ENCODE measurements at regions of chr12 and their contacts with region 1.

Region 1: DNA sequence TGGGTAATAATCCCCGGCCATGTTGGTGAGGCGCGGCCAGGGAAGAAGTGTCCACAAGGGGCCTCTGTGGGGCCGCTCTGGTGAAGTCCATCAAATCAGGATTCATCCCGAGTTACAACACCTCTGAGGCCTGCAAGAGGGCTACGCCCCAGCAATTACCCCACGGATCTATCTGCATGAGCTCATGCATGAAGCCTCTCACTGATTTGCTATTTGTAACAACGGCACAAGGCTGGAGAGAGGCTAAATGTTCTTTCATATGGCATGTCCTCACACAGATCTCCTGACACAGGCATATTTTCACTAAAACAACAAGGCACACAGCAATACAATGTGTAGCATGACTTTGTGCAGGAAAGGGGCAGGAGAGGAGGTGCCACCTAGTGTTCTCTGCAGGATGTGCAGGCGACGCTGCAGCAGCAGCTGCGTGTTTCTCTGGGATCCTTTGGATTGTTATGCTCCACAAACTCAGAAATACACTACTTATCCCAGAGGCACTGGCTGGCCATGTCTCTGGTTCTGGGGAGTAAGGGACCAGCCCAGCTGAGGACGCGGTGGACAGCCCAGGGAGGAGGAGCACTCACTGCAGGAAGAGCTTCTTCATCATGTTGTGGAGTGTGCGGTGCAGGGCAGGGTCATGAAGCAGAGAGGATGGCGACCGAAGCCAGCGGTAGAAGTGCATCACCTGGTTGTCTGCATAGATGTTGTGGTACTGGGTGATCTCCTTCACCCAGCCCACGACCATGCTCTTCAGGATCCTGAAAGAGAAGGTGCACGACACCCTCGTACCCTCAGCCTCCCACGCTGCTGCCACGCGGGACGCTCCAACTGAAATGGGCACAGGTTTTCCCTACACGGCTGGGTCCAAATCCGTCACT is 20.2 kb downstream of the P2RX2 start:
- DNase-seq: peak; percentile 30
- H3K4me3 ChIP-seq: no peak overlapping the region
- H3K27ac ChIP-seq: no peak overlapping the region
- H3K27me3 ChIP-seq: no peaks in the 10 kb centered on the region
- CTCF ChIP-seq: peak; percentile 91

Region 2: GRCh38 chr12:132397152-132397933 is 241.4 kb before region 1 on chr12:
- CTCF ChIA-PET with region 1: interaction called, 11 read pairs
- POLR2A ChIA-PET with region 1: no interaction called
- DNase-seq: no peak
- H3K4me3 ChIP-seq: no peak overlapping the region
- H3K27ac ChIP-seq: no peak overlapping the region
- H3K27me3 ChIP-seq: peaks cover 19% of the 10 kb centered on the region
- CTCF ChIP-seq: no peak

Region 3: GRCh38 chr12:132414634-132415326 is 224.0 kb before region 1 on chr12:
- CTCF ChIA-PET with region 1: interaction called, 14 read pairs
- POLR2A ChIA-PET with region 1: no interaction called
- DNase-seq: peak; percentile 34
- H3K4me3 ChIP-seq: no peak overlapping the region
- H3K27ac ChIP-seq: no peak overlapping the region
- H3K27me3 ChIP-seq: peaks cover 8% of the 10 kb centered on the region
- CTCF ChIP-seq: peak; percentile 91

Region 4: GRCh38 chr12:132651444-132652100 is 12.8 kb after region 1 on chr12:
- CTCF ChIA-PET with region 1: interaction called, 13 read pairs
- POLR2A ChIA-PET with region 1: interaction called, 14 read pairs
- DNase-seq: no peak
- H3K4me3 ChIP-seq: no peak overlapping the region
- H3K27ac ChIP-seq: no peak overlapping the region
- H3K27me3 ChIP-seq: no peaks in the 10 kb centered on the region
- CTCF ChIP-seq: no peak

Measured in AG04450 (cell line).